ENCODE measurements at regions of chr11 and their contacts with region 1.

Region 1: DNA sequence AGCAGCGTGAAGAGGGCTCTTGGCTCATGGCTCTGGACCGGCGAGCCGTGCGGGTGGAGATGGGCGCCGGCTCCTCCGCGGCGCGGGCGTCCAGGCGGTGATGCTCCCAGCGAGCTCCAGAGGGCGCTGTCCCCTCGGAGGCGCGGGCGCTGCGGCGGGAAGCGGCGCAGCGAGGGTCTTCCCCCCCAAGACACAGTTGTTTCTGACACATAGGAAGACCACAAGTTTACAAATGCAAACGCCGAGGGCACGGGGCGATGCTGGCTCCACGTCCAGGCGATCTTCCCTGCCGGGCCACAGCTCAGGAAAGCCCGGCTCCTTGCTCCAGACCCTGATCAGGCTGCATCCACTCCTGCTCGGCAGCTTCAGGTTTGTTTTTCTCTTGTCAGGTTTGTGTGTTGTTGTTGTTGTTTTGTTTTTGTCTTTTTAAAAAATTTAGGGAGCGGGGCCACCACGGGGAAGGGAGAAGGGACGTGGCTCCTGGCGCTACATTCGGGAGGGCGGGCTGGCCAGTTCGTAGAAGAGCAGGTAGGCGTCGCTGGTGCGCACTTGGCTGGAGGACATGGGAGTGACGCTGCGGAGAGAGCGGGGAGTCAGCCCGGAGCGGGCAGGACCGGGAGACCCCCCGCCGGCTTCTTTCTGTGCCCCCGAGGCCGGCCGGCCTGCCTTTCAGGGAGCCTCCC is 10.0 kb upstream of the MFRP start:
- DNase-seq: peak; percentile 93
- H3K4me3 ChIP-seq: peak overlapping the region; percentile 26 to 59 (median 50)
- H3K27ac ChIP-seq: peak overlapping the region; percentile 61 to 78 (median 70)
- H3K4me1 ChIP-seq: peaks cover 0 to 24% (median 16%) of the 10 kb centered on the region in 4 donors
- H3K27me3 ChIP-seq: no peaks in the 10 kb centered on the region
- CTCF ChIP-seq: peak; percentile 75 to 94 (median 90)
- EP300 ChIP-seq: no peak
- POLR2A ChIP-seq: no peak

Region 2: GRCh38 chr11:119144825-119145486 is 211.5 kb before region 1 on chr11:
- intact Hi-C with region 1: no loop called
- DNase-seq: no peak
- H3K4me3 ChIP-seq: no peak overlapping the region
- H3K27ac ChIP-seq: no peak overlapping the region
- H3K4me1 ChIP-seq: peaks cover 0 to 21% (median 17%) of the 10 kb centered on the region in 4 donors
- H3K27me3 ChIP-seq: peaks cover 2 to 49% (median 20%) of the 10 kb centered on the region in 3 donors
- CTCF ChIP-seq: peak in 3 of 4 experiments; percentile 54 to 67 (median 54)
- EP300 ChIP-seq: no peak
- POLR2A ChIP-seq: no peak

Region 3: DNA sequence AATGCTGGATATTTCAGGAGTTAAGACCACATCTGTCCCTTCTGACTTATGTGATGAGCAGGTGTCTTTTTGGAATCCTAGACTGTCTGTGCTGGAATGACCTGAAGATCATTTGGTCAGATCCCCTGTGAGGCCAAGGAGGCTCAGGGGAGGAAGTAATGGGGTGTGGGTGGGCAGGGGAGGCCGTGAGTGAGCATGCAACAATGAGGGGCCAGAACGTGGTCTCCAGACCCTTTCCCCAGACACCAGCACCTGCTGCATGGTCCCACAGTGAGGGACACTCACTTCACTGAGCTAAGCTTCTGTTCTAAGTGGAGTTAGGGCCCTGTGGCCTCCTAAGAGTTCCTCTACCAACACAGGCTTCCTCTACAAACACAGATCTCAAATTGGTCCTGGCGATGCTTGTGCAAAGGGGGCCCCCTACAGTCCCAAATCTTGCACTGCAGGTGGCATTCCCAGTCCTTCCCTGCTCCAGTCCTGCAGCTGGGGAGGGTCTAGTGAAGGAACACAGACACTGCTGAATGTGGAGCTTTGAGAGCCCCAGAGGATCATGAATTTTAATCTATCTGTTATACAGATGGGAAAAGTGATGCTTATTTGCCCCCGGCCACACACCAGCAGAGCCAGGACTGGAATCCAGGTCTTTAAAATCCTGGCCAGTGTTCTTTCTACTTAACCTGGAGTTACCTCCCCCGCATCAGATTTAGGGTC is 17.6 kb after region 1 on chr11:
- intact Hi-C with region 1: loop called (anchors 1 kb)
- DNase-seq: no peak
- H3K4me3 ChIP-seq: no peak overlapping the region
- H3K27ac ChIP-seq: peak overlapping the region in 3 of 4 donors; percentile 75 to 84 (median 76)
- H3K4me1 ChIP-seq: peaks cover 0 to 48% (median 31%) of the 10 kb centered on the region in 4 donors
- H3K27me3 ChIP-seq: no peaks in the 10 kb centered on the region
- CTCF ChIP-seq: peak; percentile 35 to 82 (median 78)
- EP300 ChIP-seq: no peak
- POLR2A ChIP-seq: no peak

Region 4: GRCh38 chr11:119381181-119381988 is 24.9 kb after region 1 on chr11 and contains the start of gene USP2:
- intact Hi-C with region 1: loop called (anchors 1 kb)
- DNase-seq: peak; percentile 98
- H3K4me3 ChIP-seq: peak within 1 kb of the TSS; percentile 32 to 47 (median 40)
- H3K27ac ChIP-seq: peak within 1 kb of the TSS; percentile 20 to 79 (median 62)
- H3K4me1 ChIP-seq: peaks cover 0 to 22% (median 15%) of the 10 kb centered on the region in 4 donors
- H3K27me3 ChIP-seq: no peaks in the 10 kb centered on the region
- CTCF ChIP-seq: peak; percentile 76 to 91 (median 88)
- EP300 ChIP-seq: peak in 3 of 4 donors; percentile 62 to 92 (median 82)
- POLR2A ChIP-seq: peak in 1 of 2 donors; percentile 41
- total RNA-seq, gene USP2: 0.71 to 1.9 (median 1.5) TPM

Region 5: DNA sequence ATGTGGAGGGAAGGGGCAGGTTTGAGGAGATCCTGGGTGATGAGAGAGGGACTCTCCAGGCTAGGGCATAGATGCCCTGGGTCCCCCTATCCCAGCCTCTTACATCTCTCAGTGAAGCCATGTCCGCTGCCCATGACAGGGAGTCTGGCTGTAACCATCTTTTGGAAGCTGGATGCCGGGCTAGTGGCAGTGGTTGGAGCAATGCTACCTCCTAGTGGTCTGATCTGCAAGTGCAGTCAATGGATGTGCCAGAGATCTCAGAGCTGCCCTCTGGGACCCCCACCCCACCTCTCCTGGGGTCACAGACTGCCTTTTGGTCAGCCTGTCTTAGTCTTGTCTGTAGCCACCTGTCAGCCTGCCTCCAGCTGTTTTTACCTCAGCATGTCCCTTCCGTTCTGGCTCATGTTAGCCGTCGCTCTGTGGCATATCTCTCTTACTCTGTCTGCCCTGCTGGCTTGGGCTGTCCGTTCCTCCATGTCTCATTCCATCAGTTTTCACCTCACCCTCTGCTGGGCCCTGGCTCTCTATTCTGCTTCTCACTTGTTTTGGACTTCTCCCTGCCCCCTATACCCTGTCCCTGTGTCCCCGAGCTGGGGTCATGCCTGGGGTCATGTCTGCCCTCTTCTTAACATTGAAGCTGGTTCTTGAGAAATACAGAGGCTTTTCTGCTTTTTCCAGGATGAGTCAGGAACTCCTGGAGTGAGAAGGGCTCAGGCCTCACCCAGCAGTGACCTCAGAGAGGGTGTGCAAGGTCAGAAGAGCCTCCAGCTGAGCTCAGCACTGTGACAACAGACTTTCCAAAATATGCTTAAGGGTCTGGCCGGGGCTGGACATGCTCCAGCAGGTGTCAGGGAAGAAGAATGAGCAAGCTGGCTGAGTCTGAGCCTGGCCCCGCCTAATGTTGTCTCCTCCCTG is 118.4 kb after region 1 on chr11:
- intact Hi-C with region 1: loop called (anchors 2 kb)
- DNase-seq: peak; percentile 80
- H3K4me3 ChIP-seq: no peak overlapping the region
- H3K27ac ChIP-seq: peak overlapping the region in 3 of 4 donors; percentile 19 to 63 (median 44)
- H3K4me1 ChIP-seq: peaks cover 0 to 19% (median 13%) of the 10 kb centered on the region in 4 donors
- H3K27me3 ChIP-seq: no peaks in the 10 kb centered on the region
- CTCF ChIP-seq: peak; percentile 69 to 95 (median 84)
- EP300 ChIP-seq: no peak
- POLR2A ChIP-seq: no peak

Measured in sigmoid colon (tissue), 7 donors.